Activated CD4-positive, alpha-beta memory T cell treated with anti-CD3 and anti-CD28 coated beads, Interleukin-2, amount 10 ng/mL, durations not matched to agents 7 days and 5 days (primary cell): ENCODE measurements at regions of chr6 and their contacts with region 1.

Region 1: DNA sequence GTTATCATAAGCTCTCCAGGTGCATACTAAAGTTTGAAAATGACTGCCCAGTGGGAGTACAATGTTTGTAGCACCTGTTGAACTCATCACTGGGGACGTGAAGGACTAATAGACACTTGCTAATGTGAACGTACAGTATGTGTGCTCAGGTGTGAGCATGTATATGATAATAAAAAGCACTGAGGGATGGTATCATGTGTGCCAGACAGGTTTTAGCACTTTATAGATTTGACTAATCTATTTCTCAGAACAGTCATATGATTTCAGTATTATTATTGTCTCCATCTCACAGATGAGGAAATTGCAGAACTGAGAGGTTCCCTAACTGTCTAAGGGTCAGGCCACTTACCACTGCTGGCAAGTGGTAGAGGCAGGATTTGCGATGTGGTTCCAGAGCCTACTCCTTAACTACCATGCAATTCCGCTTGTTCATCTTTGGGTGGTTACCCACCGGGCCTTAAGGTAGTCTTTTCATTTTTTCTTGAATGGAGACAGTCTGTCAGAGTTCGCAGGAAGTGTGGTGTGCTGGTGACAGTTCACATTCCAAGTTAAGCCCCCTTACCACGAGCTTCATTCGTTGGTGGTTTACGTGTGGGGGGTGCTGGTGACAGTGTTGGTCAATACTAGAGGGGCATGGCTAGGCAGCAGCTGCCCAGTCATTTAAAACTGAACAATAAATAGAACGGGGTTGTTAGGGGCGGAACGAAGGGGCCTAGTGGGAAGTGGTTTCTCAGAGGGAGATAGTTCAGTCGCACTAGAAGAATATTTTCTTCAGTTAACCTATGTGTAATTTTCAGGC is 46.8 kb downstream of the RREB1 start:
- DNase-seq: no peak
- H3K4me3 Mint-ChIP-seq: no peak overlapping the region
- H3K27ac Mint-ChIP-seq: no peak overlapping the region
- H3K4me1 Mint-ChIP-seq: peaks cover 60% of the 10 kb centered on the region
- H3K27me3 Mint-ChIP-seq: no peaks in the 10 kb centered on the region

Region 2: GRCh38 chr6:7135755-7136154 is 18.8 kb before region 1 on chr6:
- CTCF ChIA-PET with region 1: no interaction called
- POLR2A ChIA-PET with region 1: interaction called, 17 read pairs
- DNase-seq: no peak
- H3K4me3 Mint-ChIP-seq: no peak overlapping the region
- H3K27ac Mint-ChIP-seq: no peak overlapping the region
- H3K4me1 Mint-ChIP-seq: peaks cover 69% of the 10 kb centered on the region
- H3K27me3 Mint-ChIP-seq: no peaks in the 10 kb centered on the region

Region 3: GRCh38 chr6:7140631-7141378 is 13.7 kb before region 1 on chr6:
- CTCF ChIA-PET with region 1: interaction called, 3 read pairs
- POLR2A ChIA-PET with region 1: interaction called, 17 read pairs
- DNase-seq: peak; percentile 78
- H3K4me3 Mint-ChIP-seq: peak overlapping the region; percentile 75
- H3K27ac Mint-ChIP-seq: peak overlapping the region; percentile 35
- H3K4me1 Mint-ChIP-seq: peaks cover 65% of the 10 kb centered on the region
- H3K27me3 Mint-ChIP-seq: no peaks in the 10 kb centered on the region

Region 4: DNA sequence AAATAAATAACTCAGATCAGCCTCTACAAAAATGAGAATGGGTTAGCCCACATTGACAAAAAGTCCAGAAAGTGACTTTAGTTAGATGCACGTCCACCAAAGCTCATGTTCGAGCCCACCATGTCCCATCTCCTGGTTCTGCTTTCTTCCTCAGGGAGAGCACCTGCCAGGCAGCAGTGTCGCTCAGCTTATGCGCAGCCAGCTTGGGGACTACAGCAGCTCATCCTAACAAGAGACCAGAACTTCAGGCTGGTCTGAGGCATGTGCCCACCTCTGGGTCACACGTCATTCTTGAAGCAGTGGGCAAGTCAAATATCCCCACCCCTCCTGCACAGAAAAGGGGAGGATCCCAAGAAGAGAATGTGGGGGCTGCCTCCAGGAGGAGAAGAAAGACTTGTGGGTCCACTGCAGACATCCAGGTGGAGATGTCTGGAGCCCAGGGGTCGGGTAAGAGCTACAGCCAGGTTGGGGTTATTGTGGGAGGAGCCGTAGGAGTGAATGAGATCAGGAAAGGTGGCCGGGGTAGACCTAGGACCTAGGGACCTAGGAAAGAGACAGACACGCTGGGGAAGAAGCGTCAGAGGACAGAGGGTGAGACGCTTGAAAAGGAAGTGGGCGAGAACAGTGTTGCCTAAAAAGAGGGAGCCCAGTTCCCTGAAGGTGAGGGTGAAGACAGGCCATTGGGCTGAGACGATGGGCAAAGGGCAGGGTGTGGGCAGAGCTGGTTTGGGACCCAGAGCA is 105.9 kb after region 1 on chr6:
- CTCF ChIA-PET with region 1: no interaction called
- POLR2A ChIA-PET with region 1: no interaction called
- DNase-seq: no peak
- H3K4me3 Mint-ChIP-seq: peak overlapping the region; percentile 70
- H3K27ac Mint-ChIP-seq: no peak overlapping the region
- H3K4me1 Mint-ChIP-seq: peaks cover 19% of the 10 kb centered on the region
- H3K27me3 Mint-ChIP-seq: peaks cover 17% of the 10 kb centered on the region